Activated T-helper 1 cell treated with anti-CD3 and anti-CD28 coated beads, Interleukin-12 subunit alpha, Interleukin-12 subunit beta, Interleukin-2, Interleukin-4 antibody, amounts not matched to agents 30 ng/mL and 10 ng/mL and 1 ng/mL, durations not matched to agents 14 hours and 24 hours and 36 hours (primary cell): ENCODE measurements at regions of chr2 and their contacts with region 1.

Region 1: GRCh38 chr2:84970868-84971509 is at the start of gene KCMF1:
- DNase-seq: peak; percentile 67
- H3K4me3 Mint-ChIP-seq: peak within 1 kb of the TSS; percentile 100
- H3K27ac Mint-ChIP-seq: peak within 1 kb of the TSS; percentile 100
- H3K4me1 Mint-ChIP-seq: peaks cover 43% of the 10 kb centered on the region
- H3K27me3 Mint-ChIP-seq: no peaks in the 10 kb centered on the region
- total RNA-seq, gene KCMF1: 98.1 and 108 TPM in 2 replicates

Region 2: GRCh38 chr2:84187258-84187657 is 783.7 kb before region 1 on chr2:
- intact Hi-C with region 1: no loop called
- DNase-seq: no peak
- H3K4me3 Mint-ChIP-seq: no peak overlapping the region
- H3K27ac Mint-ChIP-seq: no peak overlapping the region
- H3K4me1 Mint-ChIP-seq: no peaks in the 10 kb centered on the region
- H3K27me3 Mint-ChIP-seq: peaks cover 2% of the 10 kb centered on the region

Region 3: DNA sequence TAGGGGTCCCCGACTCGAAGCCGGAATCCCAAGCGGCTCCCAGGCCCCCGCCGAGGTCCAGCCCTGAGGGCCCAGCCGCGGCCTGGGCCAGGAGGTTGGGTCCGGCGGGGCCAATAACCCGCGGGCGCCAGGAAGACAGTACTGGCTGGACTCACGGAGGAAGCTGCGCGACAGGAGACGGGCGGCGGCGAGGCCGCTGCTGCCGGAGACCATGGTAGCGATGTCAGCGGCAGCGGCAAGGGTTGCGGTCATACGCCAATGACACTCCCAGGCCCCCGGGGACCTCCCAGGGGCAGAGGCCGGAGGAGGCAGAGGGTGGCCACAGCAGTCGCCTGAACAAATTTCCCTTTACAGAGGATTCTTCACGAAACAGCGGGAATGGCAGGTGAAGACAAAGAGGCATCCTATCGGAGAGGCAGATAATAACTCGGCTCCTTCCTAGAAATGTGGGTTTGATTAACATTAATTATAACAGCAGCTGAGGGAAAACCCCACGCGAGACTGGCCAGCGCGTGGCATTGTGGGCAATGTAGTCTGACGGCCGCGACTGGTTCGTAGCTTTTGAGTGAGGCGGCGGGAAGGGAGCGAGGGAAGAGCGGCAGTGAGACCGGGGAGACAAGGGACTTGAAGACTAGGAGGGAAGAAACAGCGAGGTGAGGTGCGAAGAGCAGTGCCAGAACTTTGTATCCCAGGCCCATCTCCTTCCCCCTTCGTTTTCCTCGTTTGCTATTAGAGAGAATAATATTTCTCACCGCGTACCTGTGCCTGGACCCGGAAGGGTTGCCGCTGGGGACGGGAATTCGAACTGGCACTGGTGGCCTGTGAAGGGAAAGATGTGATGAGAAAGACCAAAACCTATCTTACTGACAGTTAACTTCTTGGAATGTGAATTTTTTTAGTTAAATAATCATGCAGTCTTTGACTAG is 511.7 kb before region 1 on chr2 and contains the start of gene SUCLG1:
- intact Hi-C with region 1: loop called (anchors 1 kb)
- DNase-seq: peak; percentile 82
- H3K4me3 Mint-ChIP-seq: peak within 1 kb of the TSS; percentile 94
- H3K27ac Mint-ChIP-seq: peak within 1 kb of the TSS; percentile 97
- H3K4me1 Mint-ChIP-seq: peaks cover 52% of the 10 kb centered on the region
- H3K27me3 Mint-ChIP-seq: no peaks in the 10 kb centered on the region
- total RNA-seq, gene SUCLG1: 66.6 and 73.0 TPM in 2 replicates

Region 4: DNA sequence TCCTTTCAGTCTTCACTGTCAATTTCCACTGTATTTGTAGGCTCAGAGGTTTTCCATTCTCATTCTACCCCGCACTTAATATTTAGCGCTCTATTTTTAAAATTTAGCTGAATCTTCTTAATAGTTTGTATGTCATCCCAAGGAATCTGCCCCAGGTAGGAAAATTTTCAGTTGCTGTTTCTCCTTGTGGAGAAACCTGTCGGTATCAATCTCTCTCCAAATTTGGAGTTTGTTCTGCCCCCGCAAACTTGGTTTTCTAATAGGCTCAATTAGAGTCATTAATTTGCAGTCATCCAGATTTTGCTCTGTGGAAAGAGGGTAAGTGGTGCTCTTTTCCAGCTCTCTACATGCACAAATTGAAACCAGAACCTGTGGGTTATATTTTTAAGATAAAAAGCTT is 367.1 kb before region 1 on chr2:
- intact Hi-C with region 1: no loop called
- DNase-seq: no peak
- H3K4me3 Mint-ChIP-seq: no peak overlapping the region
- H3K27ac Mint-ChIP-seq: no peak overlapping the region
- H3K4me1 Mint-ChIP-seq: no peaks in the 10 kb centered on the region
- H3K27me3 Mint-ChIP-seq: peaks cover 4% of the 10 kb centered on the region

Region 5: GRCh38 chr2:84939426-84940087 is 31.4 kb before region 1 on chr2:
- intact Hi-C with region 1: loop called (anchors 1 kb)
- DNase-seq: peak; percentile 83
- H3K4me3 Mint-ChIP-seq: peak overlapping the region; percentile 74
- H3K27ac Mint-ChIP-seq: peak overlapping the region; percentile 96
- H3K4me1 Mint-ChIP-seq: peaks cover 54% of the 10 kb centered on the region
- H3K27me3 Mint-ChIP-seq: no peaks in the 10 kb centered on the region

Region 6: GRCh38 chr2:84989422-84989821 is 18.4 kb after region 1 on chr2:
- intact Hi-C with region 1: loop called (anchors 2 kb)
- DNase-seq: no peak
- H3K4me3 Mint-ChIP-seq: no peak overlapping the region
- H3K27ac Mint-ChIP-seq: no peak overlapping the region
- H3K4me1 Mint-ChIP-seq: peaks cover 22% of the 10 kb centered on the region
- H3K27me3 Mint-ChIP-seq: no peaks in the 10 kb centered on the region

Region 7: GRCh38 chr2:85327822-85328617 is 357.0 kb after region 1 on chr2 and contains the start of gene TGOLN2:
- intact Hi-C with region 1: loop called (anchors 2 kb)
- DNase-seq: peak; percentile 92
- H3K4me3 Mint-ChIP-seq: peak within 1 kb of the TSS; percentile 95
- H3K27ac Mint-ChIP-seq: peak within 1 kb of the TSS; percentile 99
- H3K4me1 Mint-ChIP-seq: peaks cover 34% of the 10 kb centered on the region
- H3K27me3 Mint-ChIP-seq: no peaks in the 10 kb centered on the region
- total RNA-seq, gene TGOLN2: 102 and 104 TPM in 2 replicates